Panc1 (cell line): ENCODE measurements at regions of chr14 and their contacts with region 1.

Region 1: DNA sequence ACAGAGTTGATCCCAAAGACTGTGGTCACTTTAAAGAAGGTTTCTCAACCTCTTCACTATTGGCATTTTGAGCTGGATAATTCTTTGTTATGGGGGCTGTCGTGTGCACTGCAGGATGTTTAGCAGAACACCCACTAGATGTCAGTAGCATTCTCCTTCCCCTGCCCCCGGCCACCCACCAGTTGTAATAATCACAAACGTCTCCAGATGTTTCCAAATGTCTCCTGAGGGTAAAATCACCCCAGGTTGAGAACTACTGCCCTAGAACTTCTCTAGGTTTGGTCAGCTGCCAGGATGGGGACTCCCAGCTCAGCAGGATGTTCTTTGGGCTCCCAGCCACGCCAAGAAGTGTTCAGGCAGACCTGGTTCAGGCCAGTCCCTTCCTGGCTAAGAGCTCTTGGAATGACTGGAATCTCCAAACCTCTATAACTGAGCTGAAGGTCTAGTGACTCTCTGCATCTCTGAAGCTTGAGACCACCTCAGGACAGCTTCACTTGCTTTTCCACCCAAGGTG is 12.5 kb upstream of the AJUBA start:
- DNase-seq: no peak
- ATAC-seq: peak; percentile 91
- H3K4me3 ChIP-seq: no peak overlapping the region
- H3K27ac ChIP-seq: no peak overlapping the region
- H3K4me1 ChIP-seq: peaks cover 5% of the 10 kb centered on the region; the same call in 1 of the 2 replicates
- H3K27me3 ChIP-seq: no peaks in the 10 kb centered on the region
- CTCF ChIP-seq: peak; percentile 80

Region 2: DNA sequence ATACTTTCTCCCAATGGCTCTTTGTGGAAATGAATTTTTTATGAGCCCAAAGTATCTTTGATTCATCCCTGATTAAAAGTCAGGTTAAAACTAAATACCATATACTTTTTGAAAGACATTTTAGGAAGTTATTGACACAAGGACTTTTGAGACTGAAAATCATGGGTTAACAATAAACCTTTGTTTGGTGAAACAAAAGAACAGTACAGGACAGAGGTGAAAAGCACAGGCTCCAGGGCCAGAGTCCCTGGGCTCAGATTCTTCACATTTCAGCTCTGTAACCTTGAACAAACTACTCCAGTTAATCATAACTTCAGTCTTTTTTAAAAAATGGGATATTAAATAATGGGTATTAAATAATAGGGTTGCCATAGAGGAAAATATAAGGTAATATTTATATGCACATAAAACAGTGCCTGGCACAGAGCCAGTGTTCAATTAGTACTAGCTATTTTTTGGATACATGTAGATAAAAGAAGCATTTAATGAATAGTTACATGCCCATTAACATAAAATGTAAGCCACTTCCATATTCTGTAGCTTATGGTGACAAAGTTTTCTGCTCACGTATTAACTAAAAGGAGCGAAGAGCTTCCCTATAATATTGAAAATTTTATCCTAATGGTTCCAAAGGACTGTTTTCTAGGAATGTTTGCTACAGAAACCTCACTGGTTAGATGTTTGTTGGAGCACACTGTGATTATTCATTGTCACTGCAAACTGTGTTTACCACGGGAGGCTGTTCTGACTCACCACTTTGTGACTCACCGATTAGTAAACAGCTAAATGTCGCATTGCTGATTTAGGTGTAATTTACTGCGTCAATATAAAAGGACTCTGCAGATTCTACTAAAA is 661.2 kb before region 1 on chr14:
- CTCF ChIA-PET with region 1: no interaction called
- POLR2A ChIA-PET with region 1: no interaction called
- in situ Hi-C with region 1: no loop called
- intact Hi-C with region 1: no loop called
- DNase-seq: peak; percentile 76
- ATAC-seq: peak; percentile 99
- H3K4me3 ChIP-seq: no peak overlapping the region
- H3K27ac ChIP-seq: 0 out of 2 replicates have a peak overlapping the region, but pooled peaks have one; percentile 17
- H3K4me1 ChIP-seq: peaks cover 20% of the 10 kb centered on the region
- H3K27me3 ChIP-seq: no peaks in the 10 kb centered on the region; the same call in 1 of the 2 replicates
- CTCF ChIP-seq: no peak

Region 3: DNA sequence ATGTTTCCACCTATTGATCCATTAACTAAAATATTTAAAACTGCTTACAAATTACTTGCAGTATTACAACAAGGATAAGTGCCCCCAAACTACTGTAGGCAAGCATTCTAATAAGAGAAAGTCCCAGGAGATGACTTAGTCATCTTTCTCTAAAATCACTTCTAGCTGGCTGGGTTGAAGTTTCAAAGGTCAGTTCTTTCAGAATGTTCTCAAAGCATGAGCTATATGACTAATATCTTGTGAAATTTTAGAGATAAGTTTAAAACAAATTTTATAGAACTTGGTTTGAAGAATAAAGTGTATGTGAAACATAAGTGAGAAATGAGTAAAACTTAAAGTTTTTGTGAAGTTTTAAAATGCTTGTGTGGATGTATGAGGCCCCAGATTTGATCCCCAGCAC is 326.4 kb before region 1 on chr14:
- CTCF ChIA-PET with region 1: no interaction called
- POLR2A ChIA-PET with region 1: no interaction called
- in situ Hi-C with region 1: no loop called
- intact Hi-C with region 1: no loop called
- DNase-seq: no peak
- ATAC-seq: no peak
- H3K4me3 ChIP-seq: no peak overlapping the region
- H3K27ac ChIP-seq: no peak overlapping the region
- H3K4me1 ChIP-seq: no peaks in the 10 kb centered on the region
- H3K27me3 ChIP-seq: no peaks in the 10 kb centered on the region
- CTCF ChIP-seq: no peak

Region 4: GRCh38 chr14:22802860-22803686 is 191.7 kb before region 1 on chr14:
- CTCF ChIA-PET with region 1: no interaction called
- POLR2A ChIA-PET with region 1: no interaction called
- in situ Hi-C with region 1: no loop called
- intact Hi-C with region 1: no loop called
- DNase-seq: no peak
- ATAC-seq: no peak
- H3K4me3 ChIP-seq: no peak overlapping the region
- H3K27ac ChIP-seq: no peak overlapping the region
- H3K4me1 ChIP-seq: no peaks in the 10 kb centered on the region
- H3K27me3 ChIP-seq: no peaks in the 10 kb centered on the region; the same call in 1 of the 2 replicates
- CTCF ChIP-seq: no peak

Region 5: DNA sequence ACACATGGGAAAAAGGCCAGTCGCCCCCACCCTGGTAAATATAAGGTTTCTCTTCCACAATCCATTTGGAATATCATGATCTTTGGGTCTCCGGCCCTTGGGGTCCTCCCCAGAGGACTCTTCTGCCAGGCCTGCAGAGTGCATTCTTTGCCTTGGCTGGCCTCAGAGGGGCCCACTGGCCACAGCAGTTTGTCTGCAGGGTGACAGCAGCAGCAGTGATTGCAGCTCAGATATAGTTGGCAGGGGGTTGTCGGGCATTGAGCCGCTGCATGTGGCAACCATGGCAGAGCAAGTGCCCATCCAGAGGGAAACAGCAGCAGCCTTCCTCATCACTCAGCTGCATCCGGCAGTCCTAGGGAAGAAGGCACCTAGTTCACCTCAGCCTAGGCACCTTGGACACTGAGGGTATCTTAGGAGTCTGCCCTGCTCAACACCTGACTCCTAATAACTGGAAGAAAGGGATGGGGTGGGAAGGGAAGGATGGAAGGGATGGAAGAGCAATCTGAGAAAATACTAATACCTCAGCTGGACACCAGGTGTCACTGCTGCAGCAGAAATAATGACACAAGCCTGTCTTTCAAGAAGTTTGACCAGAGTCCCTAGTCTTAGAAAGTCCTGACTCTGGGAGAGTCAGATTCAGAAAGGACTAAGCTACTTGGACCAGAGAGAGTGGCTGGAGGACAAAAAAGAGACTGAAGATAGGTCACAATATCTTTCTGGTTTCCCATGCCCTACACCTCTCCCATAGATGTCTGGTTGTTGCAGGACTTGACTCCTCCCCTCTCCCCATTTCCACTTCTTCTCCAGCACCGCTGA is 21.4 kb before region 1 on chr14:
- CTCF ChIA-PET with region 1: interaction called, 11 read pairs
- POLR2A ChIA-PET with region 1: no interaction called
- in situ Hi-C with region 1: no loop called
- intact Hi-C with region 1: no loop called
- DNase-seq: no peak
- ATAC-seq: peak; percentile 66
- H3K4me3 ChIP-seq: no peak overlapping the region
- H3K27ac ChIP-seq: no peak overlapping the region
- H3K4me1 ChIP-seq: peaks cover 23% of the 10 kb centered on the region
- H3K27me3 ChIP-seq: no peaks in the 10 kb centered on the region
- CTCF ChIP-seq: peak; percentile 74

Region 6: DNA sequence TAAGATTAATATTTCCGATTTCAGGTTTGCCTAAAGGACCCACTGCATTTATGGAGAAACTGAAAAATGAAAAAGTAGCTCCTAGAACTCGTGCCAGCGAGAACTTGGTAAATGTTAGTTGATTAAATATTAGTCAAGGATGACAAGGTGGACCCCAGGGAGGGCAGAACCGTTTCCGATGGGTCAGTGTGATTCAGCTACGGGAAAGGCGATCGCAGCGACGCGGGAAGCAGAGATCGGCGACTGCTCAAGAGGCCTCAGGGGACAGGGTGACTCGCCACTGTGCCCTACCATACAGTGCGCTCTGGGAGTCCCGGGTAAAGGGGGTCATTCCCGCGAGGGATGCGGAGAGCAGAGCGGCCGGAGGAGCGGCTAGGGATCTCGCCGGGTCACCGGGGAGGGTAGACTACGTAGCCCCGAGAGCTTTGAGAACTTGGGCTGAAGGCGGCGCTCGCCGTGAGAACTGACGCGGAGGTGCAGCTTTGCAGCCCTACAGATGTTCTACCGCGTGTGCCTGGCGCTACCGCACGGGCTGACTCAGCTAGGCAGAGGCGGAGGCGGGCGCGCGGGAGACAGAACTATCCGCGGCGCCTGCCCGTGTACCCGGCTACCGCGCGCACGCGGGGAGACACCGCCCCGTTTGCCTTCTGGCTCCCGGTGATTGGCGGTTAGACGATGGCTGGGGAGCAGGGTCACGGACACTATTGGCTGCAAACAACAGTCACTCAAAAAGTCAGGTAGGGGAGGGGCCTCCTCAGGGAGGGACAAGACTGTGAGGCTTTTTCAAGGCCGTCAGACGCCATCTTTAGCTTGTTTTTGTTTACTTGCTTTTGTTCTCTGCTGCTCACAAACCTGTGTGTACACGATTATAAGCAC is 12.0 kb after region 1 on chr14:
- CTCF ChIA-PET with region 1: interaction called, 8 read pairs
- POLR2A ChIA-PET with region 1: interaction called, 13 read pairs
- in situ Hi-C with region 1: no loop called
- intact Hi-C with region 1: no loop called
- DNase-seq: peak; percentile 92
- ATAC-seq: peak; percentile 96
- H3K4me3 ChIP-seq: peak overlapping the region; percentile 66 to 76
- H3K27ac ChIP-seq: peak overlapping the region; percentile 99
- H3K4me1 ChIP-seq: peaks cover 22% of the 10 kb centered on the region
- H3K27me3 ChIP-seq: no peaks in the 10 kb centered on the region
- CTCF ChIP-seq: no peak; the same call in 1 of the 2 replicates

Region 7: DNA sequence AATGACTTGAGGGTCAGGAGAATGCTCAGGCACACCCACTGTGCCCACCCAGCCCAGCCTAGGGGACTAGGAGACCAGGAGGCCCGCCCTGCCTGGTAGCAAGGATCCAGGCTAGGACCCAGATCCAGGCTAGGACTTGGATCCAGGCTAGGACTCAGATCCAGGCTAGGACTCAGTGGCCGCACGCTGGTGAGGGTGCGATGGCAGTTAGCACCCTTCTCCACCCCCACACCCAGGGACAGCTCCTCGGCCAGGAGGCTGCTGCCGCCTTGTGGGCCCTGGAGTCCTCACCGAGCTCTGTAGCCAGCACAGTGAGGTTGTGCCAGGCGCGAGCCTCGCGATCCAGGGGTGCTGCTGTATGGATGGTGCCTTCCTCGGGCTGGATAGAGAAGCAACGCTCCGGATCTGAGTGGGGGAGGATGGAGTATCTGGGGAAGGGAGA is 57.4 kb after region 1 on chr14:
- CTCF ChIA-PET with region 1: interaction called, 15 read pairs
- POLR2A ChIA-PET with region 1: interaction called, 5 read pairs
- in situ Hi-C with region 1: no loop called
- intact Hi-C with region 1: no loop called
- DNase-seq: no peak
- ATAC-seq: peak; percentile 68
- H3K4me3 ChIP-seq: no peak overlapping the region
- H3K27ac ChIP-seq: no peak overlapping the region
- H3K4me1 ChIP-seq: peaks cover 3% of the 10 kb centered on the region
- H3K27me3 ChIP-seq: no peaks in the 10 kb centered on the region
- CTCF ChIP-seq: peak; percentile 84